Activated CD8-positive, alpha-beta T cell treated with anti-CD3 and anti-CD28 coated beads, Interleukin-2, amount 10 ng/mL, durations not matched to agents 7 days and 5 days (primary cell): ENCODE measurements at regions of chr16 and their contacts with region 1.

Region 1: GRCh38 chr16:74296432-74297144 is at the start of gene PSMD7:
- DNase-seq: peak; percentile 93
- ATAC-seq: peak; percentile 92
- H3K4me3 Mint-ChIP-seq: peak within 1 kb of the TSS; percentile 88
- H3K27ac Mint-ChIP-seq: peak within 1 kb of the TSS; percentile 96
- H3K4me1 Mint-ChIP-seq: peaks cover 41% of the 10 kb centered on the region
- H3K27me3 Mint-ChIP-seq: no peaks in the 10 kb centered on the region
- total RNA-seq, gene PSMD7: 95.1 to 96.1 TPM

Region 2: GRCh38 chr16:73846356-73846755 is 450.2 kb before region 1 on chr16:
- CTCF ChIA-PET with region 1: no interaction called
- POLR2A ChIA-PET with region 1: no interaction called
- DNase-seq: no peak
- ATAC-seq: no peak
- H3K4me3 Mint-ChIP-seq: no peak overlapping the region
- H3K27ac Mint-ChIP-seq: no peak overlapping the region
- H3K4me1 Mint-ChIP-seq: no peaks in the 10 kb centered on the region
- H3K27me3 Mint-ChIP-seq: no peaks in the 10 kb centered on the region

Region 3: DNA sequence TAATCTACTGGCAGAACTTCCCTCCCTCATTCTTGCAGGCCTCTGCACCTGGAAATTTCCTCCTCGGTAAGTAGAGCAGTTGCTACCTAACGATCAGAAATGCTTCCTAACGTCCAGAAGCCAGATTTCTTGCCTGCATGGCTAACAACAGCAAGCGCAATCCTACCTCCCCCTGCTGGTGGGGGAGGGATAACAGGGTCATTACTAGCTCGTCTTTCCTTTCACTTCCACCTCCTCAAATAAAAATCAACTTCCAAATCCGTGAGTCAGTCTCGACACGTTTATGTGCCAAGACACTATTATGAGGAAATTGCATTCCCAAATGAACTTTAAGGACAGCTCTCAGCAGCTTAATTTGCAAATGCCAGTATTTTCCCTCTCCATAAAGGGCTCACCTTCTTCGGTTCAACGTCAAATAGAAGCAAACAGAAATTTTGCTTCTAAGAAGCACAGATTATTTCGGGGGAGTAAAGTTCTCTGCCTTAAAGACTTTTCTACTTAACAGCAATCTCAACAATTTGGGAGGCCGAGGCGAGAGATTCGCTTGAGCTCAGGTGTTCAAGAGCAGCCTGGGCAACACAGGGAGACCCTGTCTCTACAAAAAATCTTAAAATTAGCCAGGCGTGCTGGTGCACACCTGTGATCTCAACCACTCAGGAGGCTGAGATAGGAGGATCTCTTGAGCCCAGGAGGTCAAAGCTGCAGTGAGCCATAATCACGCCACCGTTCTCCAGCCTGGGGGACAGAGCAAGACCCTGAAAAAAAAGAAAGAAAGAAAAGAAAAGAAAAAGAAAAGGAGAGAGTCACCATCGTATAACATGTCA is 188.6 kb before region 1 on chr16:
- CTCF ChIA-PET with region 1: no interaction called
- POLR2A ChIA-PET with region 1: no interaction called
- DNase-seq: peak; percentile 55
- ATAC-seq: peak; percentile 55
- H3K4me3 Mint-ChIP-seq: peak overlapping the region; percentile 48
- H3K27ac Mint-ChIP-seq: no peak overlapping the region
- H3K4me1 Mint-ChIP-seq: peaks cover 2% of the 10 kb centered on the region
- H3K27me3 Mint-ChIP-seq: no peaks in the 10 kb centered on the region

Region 4: DNA sequence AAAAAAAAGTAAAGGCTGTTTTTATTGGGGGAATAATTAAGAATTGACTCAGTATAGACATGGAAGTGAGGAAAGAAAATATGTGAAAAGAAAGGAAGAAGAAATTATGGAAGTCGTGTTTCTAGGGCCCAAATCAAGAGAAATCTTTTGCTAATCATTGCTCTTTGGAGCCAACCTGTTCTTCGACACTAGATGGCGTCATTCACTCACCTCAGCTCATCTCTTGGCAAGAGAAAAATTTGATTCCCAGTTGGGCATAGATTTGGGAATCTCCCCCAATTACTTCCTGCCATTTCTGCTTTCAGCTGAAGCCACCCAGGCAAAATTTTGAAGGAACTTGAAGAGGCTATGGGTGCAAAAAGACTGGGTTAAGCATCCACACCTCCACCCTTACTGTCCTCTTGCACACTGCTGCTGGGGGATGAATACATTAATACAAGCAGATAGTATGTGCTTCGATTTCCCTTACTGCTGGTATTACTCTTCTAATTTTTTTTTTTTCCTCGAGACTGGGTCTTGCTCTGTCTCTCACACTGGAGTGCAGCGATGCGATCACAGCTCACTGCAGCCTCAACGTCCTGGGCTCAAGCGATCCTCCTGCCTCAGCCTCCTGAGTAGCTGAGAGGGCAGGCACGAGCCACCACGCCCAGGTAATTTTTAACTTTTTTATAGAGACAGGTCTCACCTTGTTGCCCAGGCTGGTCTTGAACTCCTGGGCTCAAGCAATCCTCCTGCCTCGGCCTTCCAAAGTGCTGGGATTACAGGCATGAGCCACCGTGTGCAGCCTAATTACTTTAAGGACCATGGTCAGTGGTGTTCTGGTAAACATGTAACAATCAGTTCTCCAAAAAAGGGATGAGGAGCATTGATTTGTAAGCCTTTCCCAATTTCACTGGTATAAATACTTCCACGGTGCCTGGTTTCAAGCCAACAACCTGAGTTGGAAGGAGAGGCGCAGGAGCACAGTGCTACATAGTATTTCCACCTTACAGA is 13.5 kb after region 1 on chr16:
- CTCF ChIA-PET with region 1: interaction called, 31 read pairs
- POLR2A ChIA-PET with region 1: interaction called, 8 read pairs
- DNase-seq: peak; percentile 44
- ATAC-seq: no peak
- H3K4me3 Mint-ChIP-seq: no peak overlapping the region
- H3K27ac Mint-ChIP-seq: no peak overlapping the region
- H3K4me1 Mint-ChIP-seq: no peaks in the 10 kb centered on the region
- H3K27me3 Mint-ChIP-seq: no peaks in the 10 kb centered on the region